ENCODE measurements at regions of chr9 and their contacts with region 1.

Region 1: DNA sequence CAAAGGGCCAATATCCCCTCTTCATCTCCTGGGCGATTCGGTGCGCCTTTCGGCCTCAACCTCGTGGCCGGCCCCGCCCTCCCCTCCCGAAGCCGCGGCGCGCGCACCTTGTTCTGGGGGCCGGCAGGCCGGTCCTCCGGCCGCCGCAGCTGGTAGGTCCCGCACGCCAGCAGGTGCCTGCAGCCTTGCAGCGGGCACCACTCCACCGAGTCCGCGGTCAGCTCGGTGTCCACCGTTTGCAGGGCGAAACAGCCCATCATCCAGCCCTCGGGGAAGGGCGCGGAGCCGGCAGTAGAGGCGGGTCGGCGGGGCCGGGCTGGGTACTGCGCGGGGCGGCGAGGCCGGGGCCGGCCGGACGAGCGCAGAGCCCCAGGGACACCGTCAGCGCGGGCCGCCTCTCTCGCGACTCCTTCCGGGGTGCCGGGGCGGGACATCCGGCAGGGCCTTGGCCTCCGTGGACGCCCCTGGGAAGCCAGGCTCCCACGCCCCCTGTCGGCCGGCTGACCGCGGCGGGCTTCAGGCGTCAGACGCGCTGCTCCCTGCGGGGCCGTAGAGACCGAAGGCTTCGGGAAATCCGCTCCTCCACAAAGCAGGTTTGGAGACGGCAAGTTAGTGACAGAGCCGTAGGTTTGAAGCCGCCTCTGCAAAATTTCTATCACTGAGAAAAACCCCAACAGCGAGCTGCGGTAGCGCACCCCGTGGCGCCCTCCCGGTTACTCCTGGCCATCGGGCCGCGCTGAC is at the start of gene DPH7:
- DNase-seq: peak; percentile 84 to 98 (median 92)
- ATAC-seq: peak; percentile 99
- H3K4me3 ChIP-seq: peak within 1 kb of the TSS; percentile 83
- H3K4me3 Mint-ChIP-seq: peak within 1 kb of the TSS; percentile 72 to 90 (median 84)
- H3K27ac ChIP-seq: peak within 1 kb of the TSS; percentile 94
- H3K27ac Mint-ChIP-seq: peak within 1 kb of the TSS in 8 of 9 donors; percentile 33 to 84 (median 64)
- H3K4me1 ChIP-seq: peaks cover 8 to 13% of the 10 kb centered on the region in 2 donors
- H3K4me1 Mint-ChIP-seq: peaks cover 12 to 36% (median 30%) of the 10 kb centered on the region in 7 donors
- H3K27me3 ChIP-seq: no peaks in the 10 kb centered on the region
- H3K27me3 Mint-ChIP-seq: no peaks in the 10 kb centered on the region
- total RNA-seq, gene DPH7: 43.4 to 77.5 (median 49.9) TPM

Region 2: DNA sequence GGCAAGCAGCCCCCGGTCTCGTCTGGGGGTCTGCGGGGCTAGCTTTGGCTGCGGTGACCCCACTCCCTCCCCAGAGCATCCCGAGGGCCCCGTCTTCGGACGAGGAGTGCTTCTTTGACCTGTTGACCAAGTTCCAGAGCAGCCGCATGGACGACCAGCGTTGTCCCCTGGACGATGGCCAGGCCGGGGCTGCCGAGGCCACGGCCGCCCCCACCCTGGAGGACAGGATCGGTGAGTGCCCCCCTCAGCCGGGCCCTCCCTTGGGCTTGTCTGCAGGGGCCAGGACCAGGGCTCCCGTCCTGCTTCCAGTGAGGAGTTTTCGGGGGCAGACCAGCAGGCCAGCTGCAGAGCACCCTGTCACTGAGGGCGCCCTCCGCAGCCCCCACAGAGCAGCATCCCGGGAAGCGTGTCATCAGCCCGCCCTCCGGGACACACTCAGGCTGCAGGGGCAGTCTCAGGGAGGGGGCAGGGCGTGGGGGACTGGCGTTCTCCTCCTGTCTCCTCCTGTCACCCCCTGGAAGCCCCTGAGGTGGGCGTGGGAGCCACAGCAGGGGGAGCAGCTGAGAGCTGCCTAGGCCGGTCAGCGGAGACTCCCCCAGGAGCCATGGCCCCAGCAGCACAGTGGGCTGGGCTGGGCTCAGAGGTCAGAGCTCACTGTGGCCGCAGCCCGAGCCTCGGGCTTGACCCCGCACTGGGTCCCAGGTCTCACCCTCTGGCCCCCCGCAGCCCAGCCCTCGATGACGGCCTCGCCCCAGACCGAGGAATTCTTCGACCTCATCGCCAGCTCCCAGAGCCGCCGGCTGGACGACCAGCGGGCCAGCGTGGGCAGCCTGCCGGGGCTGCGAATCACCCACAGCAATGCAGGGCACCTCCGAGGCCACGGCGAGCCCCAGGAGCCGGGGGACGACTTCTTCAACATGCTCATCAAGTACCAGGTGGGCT is 1222.8 kb before region 1 on chr9:
- CTCF ChIA-PET with region 1: no interaction called
- POLR2A ChIA-PET with region 1: no interaction called
- intact Hi-C with region 1: no loop called
- DNase-seq: no peak
- ATAC-seq: no peak
- H3K4me3 ChIP-seq: no peak overlapping the region
- H3K4me3 Mint-ChIP-seq: no peak overlapping the region
- H3K27ac ChIP-seq: no peak overlapping the region
- H3K27ac Mint-ChIP-seq: no peak overlapping the region
- H3K4me1 ChIP-seq: no peaks in the 10 kb centered on the region
- H3K4me1 Mint-ChIP-seq: peaks cover 0 to 2% (median 0%) of the 10 kb centered on the region in 7 donors
- H3K27me3 ChIP-seq: no peaks in the 10 kb centered on the region
- H3K27me3 Mint-ChIP-seq: no peaks in the 10 kb centered on the region

Region 3: DNA sequence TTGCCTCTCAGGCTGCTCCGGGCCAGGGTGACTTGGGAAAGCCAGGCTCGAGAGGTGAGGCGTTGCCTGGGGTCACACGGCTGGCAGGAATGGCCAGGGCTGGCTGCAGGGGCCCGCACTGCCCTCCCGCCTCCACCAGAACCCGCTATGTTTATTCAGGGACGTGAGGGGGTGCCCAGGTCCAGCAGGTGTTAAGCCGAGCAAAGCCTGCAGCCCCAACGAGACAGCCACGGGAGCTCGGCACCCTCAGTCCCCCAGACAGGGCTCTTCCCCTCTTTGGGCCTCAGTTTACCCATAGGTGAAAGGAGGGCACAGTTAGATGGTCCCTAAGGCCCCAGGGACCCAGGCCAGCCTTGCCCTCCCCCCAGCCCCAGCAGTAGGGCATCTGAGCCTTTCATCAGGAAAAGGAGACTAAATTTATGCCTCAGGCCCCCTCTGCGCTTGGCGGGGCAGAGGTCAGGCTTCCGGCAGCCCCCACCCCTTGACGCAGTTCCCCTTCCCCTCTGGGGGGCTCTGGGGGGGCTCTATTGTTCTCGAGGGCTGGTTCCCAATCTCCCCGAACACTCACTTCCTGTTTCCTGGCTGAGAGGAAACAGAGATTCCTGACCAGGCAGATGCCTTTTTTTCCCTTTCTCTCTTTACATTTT is 923.0 kb before region 1 on chr9:
- CTCF ChIA-PET with region 1: no interaction called
- POLR2A ChIA-PET with region 1: no interaction called
- intact Hi-C with region 1: no loop called
- DNase-seq: no peak
- ATAC-seq: no peak
- H3K4me3 ChIP-seq: no peak overlapping the region
- H3K4me3 Mint-ChIP-seq: no peak overlapping the region
- H3K27ac ChIP-seq: no peak overlapping the region
- H3K27ac Mint-ChIP-seq: peak overlapping the region in 1 of 9 donors; percentile 46
- H3K4me1 ChIP-seq: peaks cover 0 to 15% of the 10 kb centered on the region in 2 donors
- H3K4me1 Mint-ChIP-seq: peaks cover 0 to 17% (median 14%) of the 10 kb centered on the region in 7 donors
- H3K27me3 ChIP-seq: peaks cover 3 to 14% of the 10 kb centered on the region in 2 donors
- H3K27me3 Mint-ChIP-seq: peaks cover 19 to 45% (median 41%) of the 10 kb centered on the region in 5 donors

Region 4: GRCh38 chr9:137534256-137535117 is 44.2 kb before region 1 on chr9:
- CTCF ChIA-PET with region 1: interaction called, 12 read pairs
- POLR2A ChIA-PET with region 1: interaction called, 5 read pairs
- intact Hi-C with region 1: loop called in 1 of 2 experiments (anchors 1 kb)
- DNase-seq: peak in 5 of 9 donors; percentile 15 to 38 (median 33)
- ATAC-seq: peak; percentile 64
- H3K4me3 ChIP-seq: no peak overlapping the region
- H3K4me3 Mint-ChIP-seq: peak overlapping the region in 5 of 10 donors; percentile 5 to 41 (median 11)
- H3K27ac ChIP-seq: no peak overlapping the region
- H3K27ac Mint-ChIP-seq: peak overlapping the region in 6 of 9 donors; percentile 21 to 86 (median 46)
- H3K4me1 ChIP-seq: peaks cover 11 to 28% of the 10 kb centered on the region in 2 donors
- H3K4me1 Mint-ChIP-seq: peaks cover 16 to 39% (median 29%) of the 10 kb centered on the region in 7 donors
- H3K27me3 ChIP-seq: no peaks in the 10 kb centered on the region
- H3K27me3 Mint-ChIP-seq: no peaks in the 10 kb centered on the region

Region 5: DNA sequence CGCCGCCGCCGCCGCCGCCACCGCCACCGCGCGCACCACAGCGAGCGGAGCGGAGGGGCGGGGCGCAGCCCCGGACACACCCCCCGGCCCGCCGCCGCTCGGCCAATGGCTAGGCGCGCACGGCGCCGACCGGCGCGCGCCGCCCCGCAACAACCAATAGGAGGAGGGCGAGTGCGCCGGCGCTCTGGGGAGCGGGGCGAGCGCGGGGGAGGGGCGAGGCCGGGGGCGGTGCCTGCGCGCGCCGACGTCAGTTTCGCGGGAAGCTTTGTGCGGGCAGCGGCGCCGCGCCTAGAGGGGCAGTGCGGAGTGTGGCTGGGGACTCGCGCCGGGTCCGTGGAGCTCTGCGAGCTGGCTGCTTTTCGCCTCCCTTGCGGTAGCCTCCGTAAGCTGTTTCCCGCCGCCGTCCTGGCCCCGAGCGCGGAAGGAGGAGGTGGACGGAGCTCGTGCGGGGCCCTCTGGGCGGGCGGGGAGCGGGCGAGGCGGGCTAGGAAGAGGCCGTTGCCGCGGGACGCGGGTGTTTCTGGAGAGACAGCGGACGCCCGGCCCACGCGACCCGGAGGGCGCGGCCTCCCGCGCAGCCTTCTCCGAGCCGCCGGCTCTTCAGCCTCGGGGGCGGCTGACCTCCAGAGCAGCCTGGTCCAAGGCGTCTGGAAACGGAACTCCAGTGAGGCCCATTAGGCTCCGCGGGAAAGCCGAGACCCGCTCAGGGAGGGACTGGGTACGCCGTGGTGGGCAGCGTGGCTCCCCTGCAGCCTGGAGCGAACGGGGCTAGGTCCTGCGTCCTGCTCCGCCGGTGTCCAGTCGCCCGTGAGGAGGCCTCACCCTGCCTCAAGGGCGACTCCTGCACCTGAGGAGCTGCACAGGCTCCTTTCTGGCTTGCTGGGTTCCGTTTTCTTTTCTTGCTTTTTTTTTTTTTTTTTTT is 12.0 kb after region 1 on chr9 and contains the start of gene ZMYND19:
- CTCF ChIA-PET with region 1: interaction called, 4 read pairs
- POLR2A ChIA-PET with region 1: interaction called, 4 read pairs
- intact Hi-C with region 1: loop called in 1 of 2 experiments (anchors 1 kb)
- DNase-seq: peak; percentile 84 to 97 (median 92)
- ATAC-seq: peak; percentile 99
- H3K4me3 ChIP-seq: peak within 1 kb of the TSS; percentile 64
- H3K4me3 Mint-ChIP-seq: peak within 1 kb of the TSS; percentile 88 to 96 (median 94)
- H3K27ac ChIP-seq: peak within 1 kb of the TSS; percentile 71
- H3K27ac Mint-ChIP-seq: peak within 1 kb of the TSS in 8 of 9 donors; percentile 69 to 95 (median 90)
- H3K4me1 ChIP-seq: peaks cover 0 to 12% of the 10 kb centered on the region in 2 donors
- H3K4me1 Mint-ChIP-seq: peaks cover 7 to 27% (median 16%) of the 10 kb centered on the region in 7 donors
- H3K27me3 ChIP-seq: no peaks in the 10 kb centered on the region
- H3K27me3 Mint-ChIP-seq: no peaks in the 10 kb centered on the region
- total RNA-seq, gene ZMYND19: 13.3 to 32.4 (median 26.6) TPM